ENCODE measurements at regions of chr13 and their contacts with region 1.

Region 1: GRCh38 chr13:108155185-108156106 is 59.9 kb downstream of the LIG4 start:
- DNase-seq: peak; percentile 75
- ATAC-seq: no peak
- H3K4me3 Mint-ChIP-seq: no peak overlapping the region
- H3K27ac Mint-ChIP-seq: no peak overlapping the region
- H3K4me1 Mint-ChIP-seq: no peaks in the 10 kb centered on the region
- H3K27me3 Mint-ChIP-seq: peaks cover 12% of the 10 kb centered on the region

Region 2: DNA sequence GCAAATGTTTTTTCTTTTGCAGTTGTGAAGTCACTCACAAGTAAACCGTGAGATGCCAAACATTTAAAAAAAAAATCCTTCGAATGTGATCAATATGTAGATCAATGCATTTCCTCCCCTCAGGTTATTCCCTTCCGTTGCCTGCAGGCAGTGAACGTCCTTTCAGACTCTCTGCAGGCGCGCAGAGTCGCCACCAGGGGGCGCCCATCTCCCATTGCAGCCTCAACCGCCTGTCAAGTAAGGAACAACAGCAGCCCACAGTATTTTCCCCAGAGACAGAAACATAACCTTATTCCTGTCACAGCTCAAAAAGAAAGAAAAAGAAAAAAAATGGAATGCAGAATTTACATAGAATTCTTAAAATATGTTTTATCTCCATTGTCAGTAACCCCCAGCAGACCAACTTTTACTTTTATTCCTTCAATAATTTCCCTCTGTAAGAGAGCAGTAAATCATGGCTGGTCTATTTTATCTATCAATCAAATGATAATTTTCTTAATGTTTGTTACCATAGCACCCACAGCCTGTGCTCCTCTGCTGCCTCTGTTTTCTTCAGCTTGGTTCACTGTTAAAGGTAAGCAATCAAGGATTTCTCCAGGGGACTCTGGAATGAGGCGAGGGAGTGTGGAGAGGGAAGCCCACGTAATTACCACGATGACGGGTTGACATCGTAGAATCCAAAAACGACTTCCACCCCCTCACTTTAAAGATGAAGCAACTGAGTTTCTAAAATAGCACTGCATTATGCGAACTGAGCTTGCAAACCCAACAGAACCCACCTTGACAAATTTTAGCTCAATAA is 949.9 kb before region 1 on chr13:
- CTCF ChIA-PET with region 1: interaction called, 5 read pairs
- POLR2A ChIA-PET with region 1: no interaction called
- intact Hi-C with region 1: loop called in 1 of 2 experiments (anchors 1 kb)
- DNase-seq: peak; percentile 79
- ATAC-seq: peak; percentile 77
- H3K4me3 Mint-ChIP-seq: no peak overlapping the region
- H3K27ac Mint-ChIP-seq: no peak overlapping the region
- H3K4me1 Mint-ChIP-seq: no peaks in the 10 kb centered on the region
- H3K27me3 Mint-ChIP-seq: peaks cover 3% of the 10 kb centered on the region

Region 3: GRCh38 chr13:107211073-107211472 is 944.4 kb before region 1 on chr13:
- CTCF ChIA-PET with region 1: interaction called, 8 read pairs
- POLR2A ChIA-PET with region 1: no interaction called
- intact Hi-C with region 1: loop called (anchors 1 kb)
- DNase-seq: peak; percentile 74
- ATAC-seq: peak; percentile 77
- H3K4me3 Mint-ChIP-seq: no peak overlapping the region
- H3K27ac Mint-ChIP-seq: no peak overlapping the region
- H3K4me1 Mint-ChIP-seq: no peaks in the 10 kb centered on the region
- H3K27me3 Mint-ChIP-seq: peaks cover 4% of the 10 kb centered on the region

Region 4: DNA sequence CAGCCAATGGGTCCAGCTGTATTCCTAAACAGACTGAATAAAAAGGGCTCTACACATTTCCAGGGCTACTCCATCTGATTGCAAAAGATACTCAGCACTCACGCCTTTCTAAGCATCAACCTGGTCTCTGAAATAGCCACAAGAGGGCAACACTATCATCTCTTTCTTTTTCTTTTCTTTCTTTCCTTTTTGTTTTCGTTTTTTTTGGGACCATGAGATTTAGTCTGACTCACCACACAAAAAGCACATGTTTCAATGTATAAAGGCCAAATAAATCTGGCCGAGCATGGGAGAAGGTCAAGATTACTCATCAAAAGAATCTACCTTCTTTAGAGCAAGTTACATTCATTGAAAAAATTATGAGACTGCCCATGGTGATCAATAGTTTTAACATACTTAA is 781.9 kb before region 1 on chr13:
- CTCF ChIA-PET with region 1: no interaction called
- POLR2A ChIA-PET with region 1: no interaction called
- intact Hi-C with region 1: loop called in 1 of 2 experiments (anchors 2 kb)
- DNase-seq: no peak
- ATAC-seq: no peak
- H3K4me3 Mint-ChIP-seq: no peak overlapping the region
- H3K27ac Mint-ChIP-seq: no peak overlapping the region
- H3K4me1 Mint-ChIP-seq: no peaks in the 10 kb centered on the region
- H3K27me3 Mint-ChIP-seq: no peaks in the 10 kb centered on the region

Region 5: DNA sequence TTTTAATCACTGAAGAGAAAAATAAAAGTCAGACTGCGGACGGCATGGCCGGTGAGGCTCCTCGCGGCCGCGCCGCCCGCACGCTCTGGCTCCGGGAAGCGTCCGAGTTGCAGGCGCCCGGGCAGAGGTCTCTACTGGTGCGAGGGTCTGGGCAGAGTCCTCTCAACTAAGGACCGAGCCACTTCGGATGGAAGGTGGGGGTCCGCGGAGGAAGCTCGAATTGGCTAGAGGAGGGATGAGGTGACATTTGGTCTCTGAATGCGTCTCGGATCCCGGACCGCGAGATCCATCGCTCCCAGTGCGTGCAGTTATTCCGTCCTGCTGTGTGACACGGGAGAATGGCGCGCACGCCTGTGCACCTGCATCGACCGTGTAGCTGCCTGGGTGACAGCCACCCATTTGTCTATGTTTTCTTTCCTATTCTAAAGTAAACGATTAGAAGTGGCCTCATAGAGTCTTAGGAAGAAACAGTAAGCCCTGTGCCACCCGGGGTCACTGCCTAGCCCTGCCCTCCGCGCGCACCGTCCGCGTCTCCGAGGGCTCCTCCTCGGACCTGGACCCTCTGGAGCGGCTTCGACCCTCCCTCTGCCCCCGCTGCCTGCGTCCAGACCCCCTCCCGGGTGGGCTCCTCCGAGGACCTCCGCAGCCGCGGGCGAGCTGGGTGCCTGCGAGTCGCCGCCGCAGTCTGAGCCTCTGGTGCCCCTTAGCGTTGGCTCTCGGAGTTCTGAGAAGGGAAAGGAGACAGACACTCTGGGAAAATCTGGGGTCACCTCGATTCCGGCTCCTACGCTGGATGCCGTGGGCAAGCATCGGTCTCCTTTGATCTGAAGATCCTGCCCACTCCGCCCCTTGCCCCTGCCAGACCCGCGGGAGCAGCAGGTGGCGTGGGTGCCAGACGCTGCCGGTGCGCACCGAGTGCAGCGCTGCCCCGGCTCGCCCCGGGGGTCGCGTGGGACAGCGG is 287.5 kb before region 1 on chr13:
- CTCF ChIA-PET with region 1: no interaction called
- POLR2A ChIA-PET with region 1: no interaction called
- intact Hi-C with region 1: loop called in 1 of 2 experiments (anchors 10 kb)
- DNase-seq: peak; percentile 29
- ATAC-seq: no peak
- H3K4me3 Mint-ChIP-seq: peak overlapping the region; percentile 51
- H3K27ac Mint-ChIP-seq: no peak overlapping the region
- H3K4me1 Mint-ChIP-seq: peaks cover 8% of the 10 kb centered on the region
- H3K27me3 Mint-ChIP-seq: peaks cover 43% of the 10 kb centered on the region

Region 6: DNA sequence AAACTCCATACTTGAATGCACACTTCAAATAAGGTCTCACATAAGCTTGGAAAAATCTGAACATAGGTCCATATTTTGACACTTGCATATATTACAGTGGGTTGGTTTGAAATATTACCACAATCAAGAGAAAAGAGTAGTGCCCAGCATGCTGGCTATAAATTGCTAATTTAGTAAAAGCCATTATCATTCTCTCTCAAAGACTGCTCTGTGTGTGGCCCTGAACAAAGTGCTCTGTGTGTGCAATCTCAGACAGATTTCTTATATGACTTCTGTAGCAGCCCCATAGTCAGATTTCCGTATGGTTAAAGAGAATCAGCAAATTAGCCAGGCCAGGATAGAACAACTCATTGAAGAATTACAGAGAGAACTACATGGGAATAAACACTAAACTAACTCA is 18.3 kb before region 1 on chr13:
- CTCF ChIA-PET with region 1: interaction called, 11 read pairs
- POLR2A ChIA-PET with region 1: no interaction called
- intact Hi-C with region 1: no loop called
- DNase-seq: no peak
- ATAC-seq: no peak
- H3K4me3 Mint-ChIP-seq: no peak overlapping the region
- H3K27ac Mint-ChIP-seq: no peak overlapping the region
- H3K4me1 Mint-ChIP-seq: no peaks in the 10 kb centered on the region
- H3K27me3 Mint-ChIP-seq: peaks cover 8% of the 10 kb centered on the region

Region 7: DNA sequence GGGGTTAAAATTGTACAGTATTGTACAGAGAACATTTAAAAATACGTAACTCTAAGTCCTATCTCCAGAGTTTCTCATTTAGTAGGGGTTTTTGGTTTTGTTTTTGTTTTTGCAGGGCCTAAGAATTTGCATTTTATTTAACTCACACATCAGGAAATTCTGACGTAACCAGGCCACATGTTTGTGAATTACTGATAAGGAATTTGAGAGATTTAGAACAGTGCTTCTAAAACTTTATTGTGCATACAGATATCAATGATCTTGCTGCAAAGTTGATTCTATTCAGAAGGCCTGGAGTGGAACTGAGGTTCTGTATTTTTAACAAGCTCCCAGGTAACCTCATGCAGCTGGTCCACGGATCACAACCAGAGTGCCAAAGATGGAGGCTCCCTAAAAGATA is 10.6 kb after region 1 on chr13:
- CTCF ChIA-PET with region 1: interaction called, 14 read pairs
- POLR2A ChIA-PET with region 1: no interaction called
- intact Hi-C with region 1: no loop called
- DNase-seq: no peak
- ATAC-seq: no peak
- H3K4me3 Mint-ChIP-seq: no peak overlapping the region
- H3K27ac Mint-ChIP-seq: no peak overlapping the region
- H3K4me1 Mint-ChIP-seq: no peaks in the 10 kb centered on the region
- H3K27me3 Mint-ChIP-seq: peaks cover 3% of the 10 kb centered on the region